Mucosa of descending colon (tissue), 3 donors: ENCODE measurements at regions of chr3 and their contacts with region 1.

Region 1: DNA sequence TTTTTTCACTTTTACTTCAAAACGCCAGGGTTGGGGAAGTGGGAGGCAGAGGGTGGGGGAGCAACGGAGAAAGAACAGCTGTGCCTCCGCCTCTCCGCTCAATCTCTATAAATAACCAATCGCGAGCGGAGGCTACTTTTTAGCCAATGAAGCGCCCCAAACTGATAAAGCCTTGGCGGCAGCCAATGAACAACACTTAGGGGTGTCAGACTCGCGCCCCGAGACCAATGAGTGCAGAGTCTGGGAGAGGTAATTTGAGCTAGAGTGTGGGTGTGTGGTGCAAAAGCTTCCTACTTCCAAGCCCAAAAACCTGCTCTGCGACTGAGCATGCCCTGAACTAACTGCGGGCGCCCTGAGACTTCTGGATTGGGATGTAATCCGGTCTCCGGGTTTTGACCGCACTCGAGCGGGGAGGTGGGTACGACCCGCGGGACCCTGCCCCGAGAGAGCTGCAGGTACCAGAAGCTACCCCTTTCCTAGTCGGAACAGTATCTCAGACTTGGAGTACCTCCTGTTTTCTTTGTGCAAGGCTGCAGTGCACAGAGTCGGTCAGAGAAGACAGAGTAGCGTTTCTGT is 800 bp upstream of the RAP2B start:
- DNase-seq: peak; percentile 88 to 94 (median 93)
- ATAC-seq: peak; percentile 73
- H3K4me3 ChIP-seq: peak overlapping the region; percentile 66
- H3K4me1 ChIP-seq: peaks cover 23% of the 10 kb centered on the region
- CTCF ChIP-seq: no peak

Region 2: GRCh38 chr3:153043729-153044328 is 117.4 kb before region 1 on chr3:
- intact Hi-C with region 1: loop called in 1 of 2 experiments (anchors 10 kb)
- DNase-seq: no peak
- ATAC-seq: no peak
- H3K4me3 ChIP-seq: no peak overlapping the region
- H3K4me1 ChIP-seq: no peaks in the 10 kb centered on the region
- CTCF ChIP-seq: no peak

Region 3: DNA sequence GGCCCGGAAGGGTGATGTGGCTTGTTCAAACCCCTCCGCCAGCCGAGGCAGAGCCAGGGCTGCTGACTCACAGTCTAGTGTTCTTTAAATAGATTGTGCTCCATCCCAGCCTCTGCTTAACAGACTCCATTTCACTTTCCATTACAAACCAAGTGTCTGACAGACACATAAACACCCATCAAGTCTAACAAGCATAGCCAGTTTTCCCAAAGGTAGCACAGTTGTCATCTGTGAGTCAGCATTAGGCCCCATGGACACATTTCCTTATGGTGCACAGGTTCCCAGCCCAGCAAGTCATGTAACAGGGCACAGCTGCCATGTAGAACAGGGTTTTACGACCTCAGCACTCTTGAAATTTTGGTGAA is 109.1 kb before region 1 on chr3:
- intact Hi-C with region 1: loop called (anchors 10 kb)
- DNase-seq: peak in 2 of 3 donors; percentile 16 to 40
- ATAC-seq: peak; percentile 94
- H3K4me3 ChIP-seq: no peak overlapping the region
- H3K4me1 ChIP-seq: no peaks in the 10 kb centered on the region
- CTCF ChIP-seq: no peak